Left ventricle myocardium inferior (tissue), 1 donor: ENCODE measurements at regions of chr7 and their contacts with region 1.

Region 1: DNA sequence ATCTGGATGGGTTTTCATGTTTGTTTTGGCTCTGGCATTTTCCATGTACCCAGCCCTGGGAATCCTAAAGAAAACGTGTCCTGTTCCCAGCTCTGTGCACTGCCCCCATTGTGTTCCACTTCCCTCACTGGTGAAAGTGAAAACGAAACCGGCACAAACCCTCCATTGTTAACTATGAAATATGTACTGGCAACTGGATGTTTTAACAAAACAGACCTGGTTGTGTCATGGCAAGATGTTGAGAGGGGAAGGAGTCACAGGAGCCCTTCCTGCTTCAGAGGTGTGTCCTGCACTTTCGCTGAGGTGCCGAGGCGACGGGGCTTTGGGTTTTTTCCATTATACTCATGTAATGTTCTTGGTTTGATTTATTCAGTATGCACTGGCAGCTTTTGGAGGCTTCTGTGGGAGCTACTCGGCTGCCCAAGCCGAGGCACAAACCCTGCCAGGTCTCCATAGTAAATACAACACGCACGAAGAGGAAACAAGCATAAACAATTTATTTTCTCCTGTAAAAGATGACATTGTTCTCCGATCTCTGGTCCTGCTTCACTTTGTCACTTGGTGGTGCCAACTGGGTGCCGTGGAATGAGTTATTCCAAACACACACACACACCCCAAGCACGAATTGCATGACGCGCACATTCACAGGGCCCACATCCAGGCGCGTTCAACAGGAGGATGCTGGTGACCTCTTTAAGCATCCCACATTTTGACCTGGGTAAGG is 118.2 kb downstream of the CDK6 start:
- DNase-seq: no peak
- H3K4me3 ChIP-seq: peak overlapping the region; percentile 60
- H3K27ac ChIP-seq: peak overlapping the region; percentile 93
- H3K4me1 ChIP-seq: peaks cover 81% of the 10 kb centered on the region
- H3K27me3 ChIP-seq: no peaks in the 10 kb centered on the region
- CTCF ChIP-seq: no peak

Region 2: GRCh38 chr7:92781117-92781720 is 63.1 kb after region 1 on chr7:
- intact Hi-C with region 1: loop called (anchors 10 kb)
- DNase-seq: peak; percentile 34
- H3K4me3 ChIP-seq: no peak overlapping the region
- H3K27ac ChIP-seq: peak overlapping the region; percentile 76
- H3K4me1 ChIP-seq: peaks cover 77% of the 10 kb centered on the region
- H3K27me3 ChIP-seq: no peaks in the 10 kb centered on the region
- CTCF ChIP-seq: no peak